Prostate gland (tissue), 2 donors: ENCODE measurements at regions of chr1 and their contacts with region 1.

Region 1: DNA sequence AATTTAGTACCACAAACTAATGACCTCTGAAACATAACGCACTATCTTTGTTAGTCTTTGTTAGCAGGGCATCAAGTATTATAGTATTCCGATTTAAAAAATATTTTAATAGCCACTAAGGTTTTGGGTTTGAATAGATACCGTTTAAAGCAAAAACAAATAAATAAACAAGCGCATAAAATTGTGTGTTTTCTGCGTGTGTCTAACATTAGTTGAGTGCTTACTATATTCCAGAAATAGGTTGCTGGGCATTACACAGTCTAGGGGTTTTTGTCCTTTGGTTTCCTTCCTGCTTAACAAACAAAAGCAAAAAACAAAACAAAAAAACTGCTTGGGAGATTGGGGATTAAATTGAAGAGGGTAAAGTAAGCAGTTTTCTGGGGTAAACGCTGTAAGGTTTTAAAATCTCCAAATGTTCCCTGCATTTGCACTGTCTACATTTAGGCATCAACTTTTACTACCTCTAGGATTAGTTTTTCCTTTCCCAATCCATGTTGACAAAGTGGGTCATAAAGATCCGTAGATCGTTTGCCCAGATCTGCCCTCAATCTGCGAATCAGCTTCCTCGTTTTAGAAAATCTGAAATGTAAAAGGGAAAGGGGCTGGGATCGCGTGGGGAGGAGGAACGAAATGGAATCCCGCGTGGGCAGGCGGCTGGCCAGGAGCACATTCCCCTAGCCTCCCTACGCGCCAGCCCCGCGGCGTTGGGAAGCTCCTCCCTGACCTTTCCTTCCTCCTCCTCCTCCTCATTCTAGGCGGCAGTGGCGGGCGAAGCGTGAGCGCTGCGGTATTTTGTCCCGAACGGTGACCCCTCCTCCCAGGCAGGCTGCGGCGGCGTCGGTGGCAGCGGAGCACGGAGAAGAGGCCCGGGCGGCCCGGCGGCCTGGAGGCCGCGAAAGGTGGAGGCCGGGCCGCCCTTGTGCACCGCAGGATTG is at the start of gene KCTD3:
- DNase-seq: peak; percentile 60
- H3K4me3 ChIP-seq: peak within 1 kb of the TSS; percentile 68 to 91
- H3K27ac ChIP-seq: peak within 1 kb of the TSS; percentile 91 to 93
- H3K4me1 ChIP-seq: peaks cover 6% of the 10 kb centered on the region
- H3K27me3 ChIP-seq: no peaks in the 10 kb centered on the region
- CTCF ChIP-seq: no peak
- POLR2A ChIP-seq: peak; percentile 21
- total RNA-seq, gene KCTD3: 78.3 to 95.5 TPM

Region 2: DNA sequence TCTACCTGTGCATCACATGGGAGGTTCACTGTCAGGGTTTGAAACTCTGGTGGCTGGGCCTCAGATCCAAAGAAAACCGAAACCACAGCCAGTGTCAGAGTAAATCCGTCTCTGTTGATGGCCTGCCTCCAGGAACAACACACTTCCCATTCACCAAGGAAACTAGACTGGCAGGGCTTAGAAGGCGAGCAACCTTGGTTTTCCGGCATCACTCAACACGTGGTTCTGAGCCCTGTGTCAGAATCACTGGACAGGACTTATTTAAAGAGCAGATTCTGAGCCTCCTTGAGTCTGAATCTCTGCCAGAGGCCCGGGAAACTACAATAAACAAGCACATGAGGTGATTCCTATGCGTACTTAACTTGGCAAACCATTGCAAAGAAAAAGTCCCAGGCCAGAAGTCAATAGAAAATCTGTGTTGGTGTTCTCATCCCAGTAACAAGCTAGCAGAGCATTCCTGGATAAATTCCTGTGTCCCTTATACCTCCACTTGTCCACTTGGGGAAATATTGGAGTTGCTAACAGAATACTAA is 70.3 kb after region 1 on chr1:
- intact Hi-C with region 1: loop called (anchors 10 kb)
- DNase-seq: peak; percentile 68
- H3K4me3 ChIP-seq: no peak overlapping the region
- H3K27ac ChIP-seq: peak overlapping the region; percentile 63 to 70
- H3K4me1 ChIP-seq: no peaks in the 10 kb centered on the region
- H3K27me3 ChIP-seq: no peaks in the 10 kb centered on the region
- CTCF ChIP-seq: no peak
- POLR2A ChIP-seq: no peak